A549 (cell line): ENCODE measurements at regions of chr6 and their contacts with region 1.

Region 1: GRCh38 chr6:41182069-41183034 is 18.6 kb downstream of the TREML2 start:
- DNase-seq: peak; percentile 34 to 66
- ATAC-seq: peak; percentile 94 to 98
- H3K4me3 ChIP-seq: no peak overlapping the region
- H3K27ac ChIP-seq: no peak overlapping the region
- H3K4me1 ChIP-seq: no peaks in the 10 kb centered on the region
- CTCF ChIP-seq: peak; percentile 45; the same call in 2 of the 3 replicates
- EP300 ChIP-seq: no peak
- POLR2A ChIP-seq: no peak
- RAD21 ChIP-seq: peak in 1 of 2 experiments; percentile 56; a peak in 2 of 5 replicates

Region 2: GRCh38 chr6:41092421-41093140 is 89.8 kb before region 1 on chr6:
- CTCF ChIA-PET with region 1: interaction called, 12 read pairs
- POLR2A ChIA-PET with region 1: no interaction called
- DNase-seq: peak; percentile 7 to 24
- ATAC-seq: peak in 1 of 2 experiments; percentile 57; a peak in 1 of 6 replicates
- H3K4me3 ChIP-seq: no peak overlapping the region
- H3K27ac ChIP-seq: no peak overlapping the region
- H3K4me1 ChIP-seq: no peaks in the 10 kb centered on the region
- CTCF ChIP-seq: peak; percentile 43; the same call in 2 of the 3 replicates
- EP300 ChIP-seq: no peak
- POLR2A ChIP-seq: no peak
- RAD21 ChIP-seq: peak in 1 of 2 experiments; percentile 32; a peak in 2 of 5 replicates

Region 3: GRCh38 chr6:41170547-41171160 is 11.7 kb before region 1 on chr6:
- CTCF ChIA-PET with region 1: interaction called, 14 read pairs
- POLR2A ChIA-PET with region 1: no interaction called
- DNase-seq: no peak
- ATAC-seq: no peak
- H3K4me3 ChIP-seq: no peak overlapping the region
- H3K27ac ChIP-seq: no peak overlapping the region
- H3K4me1 ChIP-seq: no peaks in the 10 kb centered on the region
- CTCF ChIP-seq: no peak
- EP300 ChIP-seq: no peak
- POLR2A ChIP-seq: no peak
- RAD21 ChIP-seq: no peak

Region 4: DNA sequence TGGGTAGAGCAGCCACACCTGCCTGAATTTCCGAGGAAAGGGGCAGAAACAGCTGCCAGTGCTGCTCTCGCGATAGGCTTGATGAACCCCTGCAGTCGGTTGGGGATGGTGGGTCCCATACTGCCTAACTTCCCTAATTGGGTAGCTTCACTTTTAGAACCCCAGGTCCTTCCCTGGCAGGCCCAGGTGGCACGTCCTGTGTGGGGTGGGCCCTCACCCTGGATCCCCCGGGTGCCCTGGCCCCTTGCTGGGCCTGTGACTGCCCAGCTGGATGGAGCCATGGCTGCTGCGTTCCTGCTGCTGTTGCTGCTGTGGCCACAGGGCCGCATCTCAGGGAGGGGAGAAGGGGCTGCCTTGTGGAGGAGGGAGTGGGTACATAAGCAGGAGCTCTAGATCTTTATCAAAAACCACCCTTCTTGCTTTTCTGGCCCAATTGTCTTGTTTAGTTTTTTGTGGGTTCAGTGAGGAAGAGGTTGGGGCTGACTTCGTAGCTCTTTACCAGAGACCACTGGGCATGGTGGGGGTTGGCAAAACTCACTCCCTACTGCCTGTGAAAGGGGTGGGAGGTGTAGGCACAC is 65.0 kb after region 1 on chr6:
- CTCF ChIA-PET with region 1: no interaction called
- POLR2A ChIA-PET with region 1: no interaction called
- DNase-seq: no peak
- ATAC-seq: no peak
- H3K4me3 ChIP-seq: no peak overlapping the region
- H3K27ac ChIP-seq: no peak overlapping the region
- H3K4me1 ChIP-seq: no peaks in the 10 kb centered on the region
- CTCF ChIP-seq: no peak
- EP300 ChIP-seq: no peak
- POLR2A ChIP-seq: no peak
- RAD21 ChIP-seq: no peak